Activated CD4-positive, alpha-beta T cell treated with anti-CD3 and anti-CD28 coated beads for 36 hours (primary cell): ENCODE measurements at regions of chr12 and their contacts with region 1.

Region 1: GRCh38 chr12:118372541-118373495 is at the start of gene TAOK3:
- DNase-seq: peak; percentile 99
- ATAC-seq: peak; percentile 91
- H3K4me3 Mint-ChIP-seq: peak within 1 kb of the TSS; percentile 91
- H3K27ac Mint-ChIP-seq: peak within 1 kb of the TSS; percentile 93
- H3K4me1 Mint-ChIP-seq: peaks cover 39% of the 10 kb centered on the region
- H3K27me3 Mint-ChIP-seq: no peaks in the 10 kb centered on the region
- total RNA-seq, gene TAOK3: 49.4 to 51.1 TPM

Region 2: DNA sequence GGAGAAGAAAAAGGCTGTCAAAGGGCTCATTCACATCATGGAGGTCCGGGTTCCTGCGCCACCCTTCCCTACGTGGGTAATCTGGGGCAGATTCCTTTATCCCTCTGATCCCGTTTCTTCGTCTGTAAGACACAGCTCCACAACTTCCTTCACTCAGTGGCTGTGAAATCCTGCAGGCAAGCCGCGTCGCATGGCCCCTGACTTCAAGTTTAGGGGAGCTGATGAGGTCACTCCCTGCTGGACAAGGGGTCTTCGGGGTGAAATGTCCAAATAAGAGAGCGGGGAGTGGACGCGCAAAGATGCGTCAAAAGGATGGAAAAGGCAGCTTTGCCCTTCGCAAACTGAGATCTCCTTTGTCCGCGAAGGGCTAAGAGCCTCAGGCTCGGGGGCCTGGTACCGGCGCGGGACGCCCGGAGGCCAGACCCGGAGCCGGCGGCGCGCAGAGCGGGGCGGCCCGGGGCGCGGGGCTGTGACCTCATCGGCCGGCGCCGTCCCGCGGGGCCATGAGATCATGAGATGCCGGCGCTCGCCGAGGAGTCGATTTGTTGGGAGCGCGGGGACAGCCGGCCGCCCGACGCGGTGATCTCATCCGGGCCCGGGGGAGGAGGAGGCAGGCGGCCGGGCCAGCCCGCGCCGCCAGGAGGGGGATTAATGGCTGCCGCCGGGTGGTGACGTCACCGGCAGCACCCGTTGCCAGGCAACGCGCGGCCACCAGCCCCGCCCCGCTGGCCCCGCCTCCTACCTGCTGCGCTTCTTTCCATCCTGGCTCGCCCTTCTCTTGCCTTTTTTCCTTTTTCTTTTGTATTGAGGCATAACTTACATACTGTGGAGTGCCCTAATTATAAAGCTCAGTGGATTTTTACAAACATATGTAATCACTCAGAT is 1553.6 kb before region 1 on chr12:
- CTCF ChIA-PET with region 1: no interaction called
- POLR2A ChIA-PET with region 1: no interaction called
- intact Hi-C with region 1: loop called in 1 of 2 experiments (anchors 5 kb)
- DNase-seq: peak; percentile 94
- ATAC-seq: peak; percentile 96
- H3K4me3 Mint-ChIP-seq: peak overlapping the region; percentile 91
- H3K27ac Mint-ChIP-seq: peak overlapping the region; percentile 95
- H3K4me1 Mint-ChIP-seq: peaks cover 16% of the 10 kb centered on the region
- H3K27me3 Mint-ChIP-seq: no peaks in the 10 kb centered on the region

Region 3: GRCh38 chr12:117968826-117969659 is 403.8 kb before region 1 on chr12 and contains the start of gene KSR2:
- CTCF ChIA-PET with region 1: no interaction called
- POLR2A ChIA-PET with region 1: no interaction called
- intact Hi-C with region 1: loop called in 1 of 2 experiments (anchors 5 kb)
- DNase-seq: peak; percentile 81
- ATAC-seq: peak; percentile 88
- H3K4me3 Mint-ChIP-seq: peak within 1 kb of the TSS; percentile 74
- H3K27ac Mint-ChIP-seq: peak within 1 kb of the TSS; percentile 26
- H3K4me1 Mint-ChIP-seq: peaks cover 9% of the 10 kb centered on the region
- H3K27me3 Mint-ChIP-seq: peaks cover 57% of the 10 kb centered on the region
- total RNA-seq, gene KSR2: 0.14 to 0.16 TPM

Region 4: GRCh38 chr12:118120579-118121363 is 252.0 kb before region 1 on chr12:
- CTCF ChIA-PET with region 1: interaction called, 7 read pairs
- POLR2A ChIA-PET with region 1: no interaction called
- intact Hi-C with region 1: loop called (anchors 1 to 2 kb)
- DNase-seq: peak; percentile 82
- ATAC-seq: peak; percentile 75
- H3K4me3 Mint-ChIP-seq: no peak overlapping the region
- H3K27ac Mint-ChIP-seq: peak overlapping the region; percentile 77
- H3K4me1 Mint-ChIP-seq: peaks cover 8% of the 10 kb centered on the region
- H3K27me3 Mint-ChIP-seq: no peaks in the 10 kb centered on the region

Region 5: DNA sequence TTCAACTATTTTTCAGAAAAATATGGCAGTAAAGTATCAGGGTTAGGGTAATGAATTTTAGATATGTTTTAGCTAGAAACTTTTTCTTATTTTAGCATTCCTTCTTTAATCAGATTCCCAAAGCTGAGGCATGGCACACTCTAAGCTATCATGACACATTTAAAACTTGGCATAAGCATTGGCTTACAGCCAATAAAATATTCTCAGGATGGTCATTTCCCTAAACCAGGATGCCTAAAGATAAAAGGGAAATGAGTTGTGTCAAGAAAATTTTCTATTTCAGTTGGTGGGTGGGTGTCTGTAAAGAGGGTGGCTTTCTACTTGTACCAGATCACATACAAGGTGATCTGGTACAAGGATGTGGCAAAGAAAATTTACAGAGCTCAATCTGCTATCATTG is 189.1 kb before region 1 on chr12:
- CTCF ChIA-PET with region 1: interaction called, 39 read pairs
- POLR2A ChIA-PET with region 1: no interaction called
- intact Hi-C with region 1: loop called (anchors 1 kb)
- DNase-seq: no peak
- ATAC-seq: no peak
- H3K4me3 Mint-ChIP-seq: no peak overlapping the region
- H3K27ac Mint-ChIP-seq: no peak overlapping the region
- H3K4me1 Mint-ChIP-seq: peaks cover 21% of the 10 kb centered on the region
- H3K27me3 Mint-ChIP-seq: no peaks in the 10 kb centered on the region

Region 6: DNA sequence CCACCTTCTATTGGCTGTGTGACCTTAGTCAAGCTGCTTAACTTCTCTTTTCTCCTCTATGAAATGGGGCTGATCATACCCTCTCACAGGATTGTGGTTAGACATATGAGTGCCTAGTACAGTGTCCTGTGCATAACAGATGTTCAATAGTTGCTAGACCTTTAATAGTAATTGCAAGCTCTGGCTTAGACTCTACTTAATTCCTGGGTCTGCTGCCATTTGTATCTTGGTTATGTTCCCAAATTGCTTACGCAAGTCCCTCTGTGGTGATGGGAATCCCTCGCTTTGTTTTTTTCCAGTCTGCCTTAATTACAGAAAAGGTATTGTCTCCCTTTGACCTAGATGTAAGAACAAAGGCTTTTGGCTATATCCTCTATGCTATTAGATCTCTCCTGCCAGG is 18.6 kb after region 1 on chr12:
- CTCF ChIA-PET with region 1: interaction called, 17 read pairs
- POLR2A ChIA-PET with region 1: no interaction called
- intact Hi-C with region 1: no loop called
- DNase-seq: no peak
- ATAC-seq: no peak
- H3K4me3 Mint-ChIP-seq: no peak overlapping the region
- H3K27ac Mint-ChIP-seq: no peak overlapping the region
- H3K4me1 Mint-ChIP-seq: no peaks in the 10 kb centered on the region
- H3K27me3 Mint-ChIP-seq: no peaks in the 10 kb centered on the region

Region 7: GRCh38 chr12:119988782-119989668 is 1616.2 kb after region 1 on chr12 and contains the start of gene BICDL1:
- CTCF ChIA-PET with region 1: no interaction called
- POLR2A ChIA-PET with region 1: no interaction called
- intact Hi-C with region 1: loop called in 1 of 2 experiments (anchors 10 kb)
- DNase-seq: peak; percentile 99
- ATAC-seq: peak; percentile 87
- H3K4me3 Mint-ChIP-seq: peak within 1 kb of the TSS; percentile 90
- H3K27ac Mint-ChIP-seq: peak within 1 kb of the TSS; percentile 92
- H3K4me1 Mint-ChIP-seq: peaks cover 46% of the 10 kb centered on the region
- H3K27me3 Mint-ChIP-seq: no peaks in the 10 kb centered on the region
- total RNA-seq, gene BICDL1: 106 to 132 TPM